CD4-positive, alpha-beta T cell (primary cell): ENCODE measurements at regions of chr3 and their contacts with region 1.

Region 1: DNA sequence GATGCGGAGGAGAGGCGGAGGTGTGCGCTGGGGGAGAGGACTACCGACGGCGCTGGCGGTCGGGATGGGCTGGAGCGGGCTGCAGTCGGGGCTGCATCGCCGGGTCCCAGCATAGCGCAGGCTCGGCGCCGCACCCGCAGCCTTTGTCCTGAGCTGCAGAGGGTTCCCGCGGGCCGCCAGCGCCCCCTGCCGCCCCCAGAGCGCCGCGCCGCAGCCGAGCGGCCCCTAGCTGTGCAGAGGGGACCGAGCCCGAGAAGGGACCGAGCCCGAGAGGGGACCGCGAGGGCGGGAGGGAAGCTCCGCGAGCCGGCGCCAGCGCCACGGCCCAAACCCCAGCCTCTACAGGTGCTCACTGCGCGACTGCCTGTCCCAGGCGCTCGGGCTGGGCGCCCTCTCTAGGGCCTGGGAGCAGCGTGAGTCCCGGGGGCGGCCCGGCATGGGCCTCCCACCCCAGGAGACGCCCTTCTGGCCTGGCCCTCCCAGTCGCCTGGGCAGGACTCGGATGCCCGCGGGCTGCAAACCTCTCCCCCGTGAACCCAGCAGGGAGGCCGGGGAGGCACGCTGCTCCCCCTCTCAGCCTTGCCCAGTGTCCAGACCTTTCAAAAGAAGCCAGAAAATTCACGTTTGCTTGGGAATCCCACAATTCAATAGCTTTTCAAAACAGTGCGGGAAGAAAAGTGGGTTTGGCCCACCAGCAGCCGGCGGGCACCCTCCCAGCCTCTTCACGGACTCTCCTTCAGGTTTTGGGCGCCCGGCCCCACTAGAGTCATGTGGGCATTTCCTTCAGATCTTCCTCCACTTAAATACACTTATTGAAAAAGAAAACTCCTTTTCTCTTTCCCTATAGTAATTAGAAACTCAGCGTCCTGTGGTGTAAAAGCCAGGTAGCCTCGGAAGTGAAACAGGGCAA is 134.7 kb downstream of the TPRA1 start:
- DNase-seq: peak in 11 of 14 experiments; percentile 11 to 59 (median 34)
- ATAC-seq: peak; percentile 57
- H3K4me3 ChIP-seq: no peak overlapping the region
- H3K4me3 Mint-ChIP-seq: no peak overlapping the region
- H3K27ac ChIP-seq: no peak overlapping the region
- H3K27ac Mint-ChIP-seq: no peak overlapping the region
- H3K4me1 ChIP-seq: peaks cover 22% of the 10 kb centered on the region
- H3K4me1 Mint-ChIP-seq: peaks cover 14% of the 10 kb centered on the region
- H3K27me3 ChIP-seq: peaks cover 40 to 63% of the 10 kb centered on the region in 2 experiments
- H3K27me3 Mint-ChIP-seq: peaks cover 78% of the 10 kb centered on the region
- CTCF ChIP-seq: peak; percentile 47

Region 2: GRCh38 chr3:126522363-126522788 is 933.4 kb before region 1 on chr3:
- CTCF ChIA-PET with region 1: interaction called, 3 read pairs
- POLR2A ChIA-PET with region 1: no interaction called
- intact Hi-C with region 1: loop called in 1 of 2 experiments (anchors 2 kb)
- DNase-seq: peak; percentile 12 to 60 (median 26)
- ATAC-seq: no peak
- H3K4me3 ChIP-seq: no peak overlapping the region
- H3K4me3 Mint-ChIP-seq: no peak overlapping the region
- H3K27ac ChIP-seq: no peak overlapping the region
- H3K27ac Mint-ChIP-seq: no peak overlapping the region
- H3K4me1 ChIP-seq: peaks cover 5% of the 10 kb centered on the region
- H3K4me1 Mint-ChIP-seq: no peaks in the 10 kb centered on the region
- H3K27me3 ChIP-seq: peaks cover 12 to 17% of the 10 kb centered on the region in 2 experiments
- H3K27me3 Mint-ChIP-seq: peaks cover 19% of the 10 kb centered on the region
- CTCF ChIP-seq: peak; percentile 91

Region 3: GRCh38 chr3:126679318-126679751 is 776.5 kb before region 1 on chr3:
- CTCF ChIA-PET with region 1: no interaction called
- POLR2A ChIA-PET with region 1: no interaction called
- intact Hi-C with region 1: loop called in 1 of 2 experiments (anchors 2 kb)
- DNase-seq: peak; percentile 52 to 84 (median 74)
- ATAC-seq: peak; percentile 81
- H3K4me3 ChIP-seq: no peak overlapping the region
- H3K4me3 Mint-ChIP-seq: no peak overlapping the region
- H3K27ac ChIP-seq: no peak overlapping the region
- H3K27ac Mint-ChIP-seq: no peak overlapping the region
- H3K4me1 ChIP-seq: peaks cover 7% of the 10 kb centered on the region
- H3K4me1 Mint-ChIP-seq: peaks cover 6% of the 10 kb centered on the region
- H3K27me3 ChIP-seq: peaks cover 2 to 11% of the 10 kb centered on the region in 2 experiments
- H3K27me3 Mint-ChIP-seq: peaks cover 20% of the 10 kb centered on the region
- CTCF ChIP-seq: peak; percentile 97

Region 4: DNA sequence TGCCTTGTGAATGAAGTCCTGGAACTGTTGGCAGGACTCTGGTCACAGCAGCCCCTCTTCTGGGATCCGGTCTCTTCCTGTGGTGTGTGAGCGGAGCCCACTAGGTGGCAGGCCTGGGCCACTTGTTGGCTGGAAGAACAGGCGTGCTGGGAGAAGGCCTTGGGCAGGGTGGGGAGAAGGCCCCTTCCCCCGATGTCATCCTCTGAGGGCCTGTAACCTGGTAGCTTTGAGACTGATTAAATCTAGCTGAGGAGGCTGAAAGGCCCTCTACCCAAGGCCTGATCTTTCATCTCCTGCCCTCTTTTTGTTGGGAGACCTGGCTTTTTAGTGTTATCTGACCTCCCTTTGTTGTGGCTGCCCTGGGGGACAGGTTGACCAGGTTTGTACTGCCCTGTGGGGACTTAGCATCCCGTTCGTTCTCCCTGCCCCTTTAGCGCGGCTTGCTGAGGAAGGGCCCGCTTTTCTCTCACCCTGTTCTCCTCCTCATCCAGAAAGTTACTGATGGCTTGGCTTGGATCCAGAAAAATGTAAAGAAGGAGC is 703.4 kb before region 1 on chr3:
- CTCF ChIA-PET with region 1: no interaction called
- POLR2A ChIA-PET with region 1: no interaction called
- intact Hi-C with region 1: loop called in 1 of 2 experiments (anchors 5 kb)
- DNase-seq: peak in 13 of 14 experiments; percentile 6 to 59 (median 26)
- ATAC-seq: no peak
- H3K4me3 ChIP-seq: no peak overlapping the region
- H3K4me3 Mint-ChIP-seq: no peak overlapping the region
- H3K27ac ChIP-seq: no peak overlapping the region
- H3K27ac Mint-ChIP-seq: no peak overlapping the region
- H3K4me1 ChIP-seq: no peaks in the 10 kb centered on the region
- H3K4me1 Mint-ChIP-seq: peaks cover 8% of the 10 kb centered on the region
- H3K27me3 ChIP-seq: no peaks in the 10 kb centered on the region
- H3K27me3 Mint-ChIP-seq: no peaks in the 10 kb centered on the region
- CTCF ChIP-seq: peak; percentile 35

Region 5: DNA sequence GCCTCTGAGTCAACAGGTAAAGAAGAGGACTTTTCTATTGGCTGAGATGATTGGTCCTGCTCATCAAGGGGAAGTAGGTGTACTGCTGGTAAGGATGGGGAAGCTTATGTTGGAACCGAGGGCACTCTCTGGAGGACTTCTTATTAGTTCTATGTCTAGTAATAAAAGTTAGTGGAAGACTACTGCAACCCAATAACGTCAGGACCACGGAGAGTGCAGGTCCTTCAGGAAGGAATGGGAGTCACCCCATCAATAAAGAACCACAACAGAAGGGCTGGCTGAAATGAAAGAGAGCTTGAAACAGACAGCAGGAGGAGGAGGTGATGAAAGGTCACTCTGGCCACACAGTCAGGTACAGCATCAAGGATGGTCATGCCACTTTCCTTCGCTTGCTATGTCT is 331.7 kb before region 1 on chr3:
- CTCF ChIA-PET with region 1: no interaction called
- POLR2A ChIA-PET with region 1: no interaction called
- intact Hi-C with region 1: no loop called
- DNase-seq: no peak
- ATAC-seq: no peak
- H3K4me3 ChIP-seq: no peak overlapping the region
- H3K4me3 Mint-ChIP-seq: no peak overlapping the region
- H3K27ac ChIP-seq: no peak overlapping the region
- H3K27ac Mint-ChIP-seq: no peak overlapping the region
- H3K4me1 ChIP-seq: no peaks in the 10 kb centered on the region
- H3K4me1 Mint-ChIP-seq: no peaks in the 10 kb centered on the region
- H3K27me3 ChIP-seq: peaks cover 14% of the 10 kb centered on the region in 2 experiments
- H3K27me3 Mint-ChIP-seq: peaks cover 23% of the 10 kb centered on the region
- CTCF ChIP-seq: no peak